ENCODE measurements at regions of chr6 and their contacts with region 1.

Region 1: GRCh38 chr6:107674995-107675738 is 148.9 kb downstream of the SCML4 start:
- DNase-seq: peak; percentile 93
- ATAC-seq: peak; percentile 91
- H3K4me3 ChIP-seq: peak overlapping the region in 4 of 5 experiments; percentile 29 to 58 (median 48)
- H3K4me3 Mint-ChIP-seq: peak overlapping the region; percentile 89
- H3K27ac ChIP-seq: peak overlapping the region; percentile 75 to 89
- H3K27ac Mint-ChIP-seq: peak overlapping the region; percentile 92
- H3K4me1 ChIP-seq: peaks cover 29% of the 10 kb centered on the region in 2 donors
- H3K4me1 Mint-ChIP-seq: peaks cover 28% of the 10 kb centered on the region
- H3K27me3 ChIP-seq: no peaks in the 10 kb centered on the region
- H3K27me3 Mint-ChIP-seq: no peaks in the 10 kb centered on the region
- CTCF ChIP-seq: peak; percentile 94

Region 2: DNA sequence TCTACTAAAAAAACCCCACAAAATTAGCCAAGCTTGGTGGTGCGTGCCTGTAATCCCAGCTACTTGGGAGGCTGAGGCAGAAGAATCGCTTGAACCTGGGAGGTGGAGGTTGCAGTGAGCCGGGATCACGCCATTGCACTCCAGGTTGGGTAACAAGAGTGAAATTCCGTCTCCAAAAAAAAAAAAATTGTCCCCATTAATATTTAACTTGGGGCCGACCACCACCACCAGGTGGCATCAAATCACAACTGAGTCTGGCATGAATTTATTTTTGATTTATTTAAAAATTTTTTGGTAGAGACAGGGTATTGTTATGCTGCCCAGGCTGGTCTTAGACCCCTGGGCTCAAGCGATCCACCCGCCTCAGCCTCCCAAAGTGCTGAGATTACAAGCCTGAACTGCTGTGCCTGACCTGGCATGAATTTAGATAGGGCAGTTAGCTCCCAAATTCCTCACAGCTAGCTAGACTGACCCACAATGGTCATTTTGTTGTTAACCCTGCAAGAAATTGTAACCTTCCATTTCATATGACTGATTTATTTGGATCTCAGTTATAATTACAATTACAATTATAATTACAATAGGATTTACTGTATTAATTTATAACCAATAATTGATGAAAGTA is 542.7 kb before region 1 on chr6:
- CTCF ChIA-PET with region 1: interaction called, 4 read pairs
- POLR2A ChIA-PET with region 1: no interaction called
- intact Hi-C with region 1: loop called (anchors 2 kb)
- DNase-seq: peak; percentile 47
- ATAC-seq: no peak
- H3K4me3 ChIP-seq: no peak overlapping the region
- H3K4me3 Mint-ChIP-seq: no peak overlapping the region
- H3K27ac ChIP-seq: no peak overlapping the region
- H3K27ac Mint-ChIP-seq: no peak overlapping the region
- H3K4me1 ChIP-seq: no peaks in the 10 kb centered on the region
- H3K4me1 Mint-ChIP-seq: no peaks in the 10 kb centered on the region
- H3K27me3 ChIP-seq: no peaks in the 10 kb centered on the region
- H3K27me3 Mint-ChIP-seq: peaks cover 3% of the 10 kb centered on the region
- CTCF ChIP-seq: peak; percentile 59

Region 3: GRCh38 chr6:107459283-107460082 is 215.7 kb before region 1 on chr6 and contains the start of gene PDSS2:
- CTCF ChIA-PET with region 1: interaction called, 8 read pairs
- POLR2A ChIA-PET with region 1: no interaction called
- intact Hi-C with region 1: loop called (anchors 1 kb)
- DNase-seq: peak; percentile 96
- ATAC-seq: peak; percentile 96
- H3K4me3 ChIP-seq: peak within 1 kb of the TSS; percentile 70 to 96 (median 93)
- H3K4me3 Mint-ChIP-seq: peak within 1 kb of the TSS; percentile 88
- H3K27ac ChIP-seq: peak within 1 kb of the TSS; percentile 88 to 91
- H3K27ac Mint-ChIP-seq: peak within 1 kb of the TSS; percentile 99
- H3K4me1 ChIP-seq: peaks cover 10 to 13% of the 10 kb centered on the region in 2 donors
- H3K4me1 Mint-ChIP-seq: peaks cover 25% of the 10 kb centered on the region
- H3K27me3 ChIP-seq: no peaks in the 10 kb centered on the region
- H3K27me3 Mint-ChIP-seq: no peaks in the 10 kb centered on the region
- CTCF ChIP-seq: peak; percentile 52
- total RNA-seq, gene PDSS2: 16.9 and 18.3 TPM in 2 replicates

Region 4: DNA sequence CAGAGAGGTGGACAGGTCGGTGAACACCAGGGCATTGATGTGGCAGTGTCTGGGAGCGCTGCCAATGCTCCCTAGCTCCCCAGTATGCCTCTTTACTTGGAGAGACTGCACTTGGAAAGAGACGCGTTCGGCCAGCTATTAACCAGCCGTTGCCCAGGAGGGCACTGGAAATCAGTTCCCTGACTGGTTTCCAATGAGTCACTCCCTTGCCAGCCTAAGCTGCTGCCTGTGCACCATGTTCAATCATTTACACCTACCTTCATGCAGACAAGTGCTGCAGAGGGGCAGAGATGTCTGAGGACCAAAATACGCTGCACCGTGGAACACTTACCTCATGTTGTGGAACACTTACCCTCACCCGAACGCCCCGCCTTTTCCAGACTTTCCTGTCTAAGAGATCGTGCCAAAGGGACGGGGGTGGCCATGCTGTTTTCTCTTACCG is 33.6 kb before region 1 on chr6:
- CTCF ChIA-PET with region 1: interaction called, 8 read pairs
- POLR2A ChIA-PET with region 1: no interaction called
- intact Hi-C with region 1: loop called (anchors 2 kb)
- DNase-seq: no peak
- ATAC-seq: no peak
- H3K4me3 ChIP-seq: no peak overlapping the region
- H3K4me3 Mint-ChIP-seq: peak overlapping the region; percentile 62
- H3K27ac ChIP-seq: peak overlapping the region; percentile 56 to 65
- H3K27ac Mint-ChIP-seq: peak overlapping the region; percentile 74
- H3K4me1 ChIP-seq: peaks cover 65 to 75% of the 10 kb centered on the region in 2 donors
- H3K4me1 Mint-ChIP-seq: peaks cover 70% of the 10 kb centered on the region
- H3K27me3 ChIP-seq: no peaks in the 10 kb centered on the region
- H3K27me3 Mint-ChIP-seq: no peaks in the 10 kb centered on the region
- CTCF ChIP-seq: no peak

Region 5: DNA sequence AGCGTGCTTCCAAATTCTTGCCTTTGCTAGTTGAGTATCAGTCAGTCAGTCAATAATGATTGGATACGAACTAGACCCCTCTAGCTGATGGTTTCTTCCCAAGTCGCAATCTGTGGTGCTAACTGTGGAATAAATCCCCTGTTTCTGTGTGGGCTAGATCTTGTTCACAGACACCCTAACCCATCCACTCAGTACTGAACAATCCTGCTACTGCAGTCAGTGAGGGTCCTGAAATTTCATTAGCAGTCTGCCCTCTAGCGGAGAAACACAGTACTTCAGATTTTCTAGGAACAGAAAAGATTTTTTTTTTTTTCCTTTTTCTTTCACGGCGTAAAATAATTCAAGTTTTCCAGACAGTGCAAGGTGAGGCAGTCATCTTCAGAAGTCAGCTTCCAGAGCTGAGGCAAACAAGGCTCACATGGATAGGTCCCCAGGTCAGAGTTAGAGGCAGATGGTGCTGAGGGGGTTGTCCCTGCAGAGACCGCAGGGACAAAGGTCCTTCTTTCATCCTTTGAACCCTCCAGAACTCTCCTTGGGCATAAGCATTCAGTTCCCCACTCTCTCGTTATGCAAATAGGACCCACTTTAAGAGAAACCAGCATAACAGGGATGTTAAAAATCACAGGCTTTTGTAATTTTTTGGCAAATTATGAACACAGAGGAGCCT is 29.3 kb after region 1 on chr6:
- CTCF ChIA-PET with region 1: interaction called, 14 read pairs
- POLR2A ChIA-PET with region 1: no interaction called
- intact Hi-C with region 1: loop called (anchors 1 kb)
- DNase-seq: peak; percentile 67
- ATAC-seq: peak; percentile 53
- H3K4me3 ChIP-seq: no peak overlapping the region
- H3K4me3 Mint-ChIP-seq: no peak overlapping the region
- H3K27ac ChIP-seq: no peak overlapping the region
- H3K27ac Mint-ChIP-seq: no peak overlapping the region
- H3K4me1 ChIP-seq: peaks cover 0 to 5% of the 10 kb centered on the region in 2 donors
- H3K4me1 Mint-ChIP-seq: peaks cover 2% of the 10 kb centered on the region
- H3K27me3 ChIP-seq: no peaks in the 10 kb centered on the region
- H3K27me3 Mint-ChIP-seq: no peaks in the 10 kb centered on the region
- CTCF ChIP-seq: peak; percentile 85

Region 6: DNA sequence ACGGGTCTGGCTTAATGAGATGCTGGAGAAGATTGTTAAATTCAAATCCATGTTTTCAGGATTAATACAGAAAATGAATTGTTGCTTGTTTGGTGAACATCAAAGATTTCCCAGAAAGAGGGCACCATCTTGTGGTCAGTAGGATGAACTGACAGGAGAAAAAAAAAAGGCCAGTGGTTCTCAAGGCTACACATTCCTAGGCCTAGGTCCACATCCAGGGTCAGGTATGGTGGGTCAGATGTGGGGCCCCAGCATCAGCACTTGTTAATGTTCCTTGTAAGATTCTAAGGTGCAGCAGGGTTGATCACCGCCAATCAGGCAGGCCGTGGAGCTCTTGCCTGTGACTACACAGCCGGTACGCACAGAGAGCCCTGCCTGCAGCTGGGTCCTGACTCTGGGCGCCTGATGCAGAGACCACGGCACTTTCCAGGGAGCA is 851.6 kb after region 1 on chr6:
- CTCF ChIA-PET with region 1: no interaction called
- POLR2A ChIA-PET with region 1: no interaction called
- intact Hi-C with region 1: loop called (anchors 1 kb)
- DNase-seq: peak; percentile 63
- ATAC-seq: peak; percentile 49
- H3K4me3 ChIP-seq: no peak overlapping the region
- H3K4me3 Mint-ChIP-seq: no peak overlapping the region
- H3K27ac ChIP-seq: no peak overlapping the region
- H3K27ac Mint-ChIP-seq: no peak overlapping the region
- H3K4me1 ChIP-seq: no peaks in the 10 kb centered on the region
- H3K4me1 Mint-ChIP-seq: no peaks in the 10 kb centered on the region
- H3K27me3 ChIP-seq: no peaks in the 10 kb centered on the region
- H3K27me3 Mint-ChIP-seq: no peaks in the 10 kb centered on the region
- CTCF ChIP-seq: peak; percentile 86